Activated T-helper 1 cell treated with anti-CD3 and anti-CD28 coated beads, Interleukin-12 subunit alpha, Interleukin-12 subunit beta, Interleukin-2, Interleukin-4 antibody, amounts not matched to agents 30 ng/mL and 10 ng/mL and 1 ng/mL, durations not matched to agents 14 hours and 24 hours and 36 hours (primary cell): ENCODE measurements at regions of chr17 and their contacts with region 1.

Region 1: GRCh38 chr17:29148790-29149430 is 31.3 kb downstream of the MYO18A start:
- DNase-seq: peak; percentile 91
- H3K4me3 Mint-ChIP-seq: peak overlapping the region; percentile 79
- H3K27ac Mint-ChIP-seq: peak overlapping the region; percentile 64
- H3K4me1 Mint-ChIP-seq: peaks cover 63% of the 10 kb centered on the region
- H3K27me3 Mint-ChIP-seq: no peaks in the 10 kb centered on the region

Region 2: GRCh38 chr17:29111816-29112499 is 37.0 kb before region 1 on chr17:
- intact Hi-C with region 1: no loop called
- DNase-seq: peak; percentile 41
- H3K4me3 Mint-ChIP-seq: no peak overlapping the region
- H3K27ac Mint-ChIP-seq: no peak overlapping the region
- H3K4me1 Mint-ChIP-seq: no peaks in the 10 kb centered on the region
- H3K27me3 Mint-ChIP-seq: no peaks in the 10 kb centered on the region

Region 3: DNA sequence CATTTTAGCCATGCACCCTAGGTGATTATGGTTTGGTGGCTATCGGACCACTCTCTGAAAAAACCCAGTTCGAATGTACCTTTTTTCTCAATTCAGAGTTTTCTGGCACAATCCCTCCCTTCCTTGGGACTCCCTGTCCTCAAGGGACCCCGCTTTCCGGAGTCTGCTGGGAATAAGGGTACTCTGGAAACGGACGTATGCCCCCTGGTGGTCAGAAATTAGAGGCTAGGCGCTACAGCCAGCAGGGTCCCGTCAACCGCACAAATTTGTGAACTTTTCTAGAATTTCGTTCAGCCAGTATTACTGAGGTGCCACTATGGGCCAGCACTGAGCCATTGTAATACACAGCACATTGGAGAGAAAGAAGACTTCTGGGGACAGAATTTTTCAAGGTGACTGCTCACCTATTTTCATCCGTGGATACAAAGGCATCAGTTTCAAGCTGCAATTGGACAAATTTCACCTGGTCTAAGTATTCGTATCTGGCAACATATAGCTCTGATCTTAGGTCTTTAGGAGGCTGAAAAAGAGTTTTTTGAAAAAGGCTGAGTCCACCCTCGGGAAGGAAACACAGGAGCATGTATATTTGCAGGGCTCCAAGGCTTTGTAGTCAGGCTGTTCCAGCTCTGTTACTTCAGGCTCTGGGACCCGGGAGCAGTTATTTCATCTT is 70.6 kb after region 1 on chr17:
- intact Hi-C with region 1: loop called (anchors 1 kb)
- DNase-seq: peak; percentile 55
- H3K4me3 Mint-ChIP-seq: no peak overlapping the region
- H3K27ac Mint-ChIP-seq: no peak overlapping the region
- H3K4me1 Mint-ChIP-seq: peaks cover 9% of the 10 kb centered on the region
- H3K27me3 Mint-ChIP-seq: peaks cover 4% of the 10 kb centered on the region